Posterior vena cava (tissue), 2 donors: ENCODE measurements at regions of chr10 and their contacts with region 1.

Region 1: DNA sequence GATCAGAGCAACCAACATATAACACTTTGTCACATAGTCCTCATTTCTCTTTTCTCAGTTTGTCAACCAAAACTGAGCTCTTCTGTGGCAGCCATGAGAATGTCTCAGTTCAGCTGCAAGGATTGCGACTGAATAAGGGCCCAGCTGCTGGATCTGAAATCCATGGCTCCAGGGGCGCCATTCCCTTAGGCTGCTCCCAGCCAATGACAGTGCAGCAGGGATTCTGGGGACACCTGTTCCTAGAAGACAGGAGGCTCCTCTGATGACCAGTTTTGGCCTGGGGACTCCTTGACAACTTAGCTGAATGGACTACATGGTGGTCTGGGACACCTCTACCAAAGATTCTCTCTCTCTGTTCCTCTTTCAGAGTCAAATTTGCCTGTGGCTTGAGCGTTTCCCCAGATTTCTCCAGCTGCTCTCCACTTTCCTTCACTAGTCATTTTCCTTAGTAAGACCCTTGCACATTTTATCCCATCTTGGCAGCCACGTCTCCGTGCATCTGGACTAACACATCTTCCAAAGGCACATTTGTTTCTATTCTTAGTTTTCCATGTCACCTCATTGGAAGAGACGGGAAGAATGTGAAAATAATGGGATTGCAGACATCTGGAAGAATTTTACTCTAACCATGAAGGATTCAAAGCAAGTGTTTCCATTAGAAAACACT is 28.1 kb upstream of the KIF5B start:
- DNase-seq: no peak

Region 2: DNA sequence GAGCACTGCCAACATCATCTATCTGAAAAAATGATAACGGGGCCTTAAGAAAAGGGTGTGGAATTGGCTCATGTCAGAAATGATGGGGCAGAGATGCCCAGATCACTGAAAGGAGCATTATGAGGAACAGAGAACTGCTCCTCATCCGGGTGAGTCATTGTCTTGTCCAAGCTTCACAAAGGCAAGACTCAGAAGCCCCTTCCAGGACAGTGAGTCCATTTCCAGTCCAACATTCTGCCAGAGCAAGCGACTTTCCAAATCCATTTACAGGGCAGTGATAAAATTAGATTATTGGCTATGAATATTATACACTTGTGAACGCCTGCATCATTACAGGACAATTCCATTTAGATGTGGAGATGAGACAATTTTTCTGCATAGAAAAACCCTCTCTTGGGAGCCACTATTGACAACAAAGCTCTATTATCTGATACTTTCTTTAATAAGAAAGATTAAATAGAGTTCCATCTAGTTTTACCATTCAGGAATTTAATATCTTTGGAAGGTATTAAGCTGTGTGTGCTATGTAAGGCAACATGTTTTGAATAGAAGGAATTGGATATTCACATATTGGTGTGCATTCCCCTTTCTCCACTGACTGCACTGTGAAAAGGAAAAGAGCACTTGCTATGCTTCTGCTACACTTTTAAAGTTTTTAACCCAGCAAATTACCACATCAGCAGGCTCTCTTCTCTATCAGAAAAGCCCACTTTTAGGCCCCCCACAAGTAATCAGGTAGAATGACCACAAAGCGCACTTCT is 1090.5 kb after region 1 on chr10:
- intact Hi-C with region 1: loop called in 1 of 2 experiments (anchors 5 kb)
- DNase-seq: no peak